Heart left ventricle (tissue), 16 donors: ENCODE measurements at regions of chr11 and their contacts with region 1.

Region 1: GRCh38 chr11:101436511-101437142 is 147.2 kb downstream of the TRPC6 start:
- DNase-seq: peak in 2 of 5 donors; percentile 32
- ATAC-seq: peak in 1 of 4 donors; percentile 73
- H3K4me3 ChIP-seq: no peak overlapping the region
- H3K27ac ChIP-seq: no peak overlapping the region
- H3K4me1 ChIP-seq: peaks cover 0 to 7% (median 2%) of the 10 kb centered on the region in 12 donors
- H3K27me3 ChIP-seq: no peaks in the 10 kb centered on the region
- CTCF ChIP-seq: peak; percentile 40 to 70 (median 60)
- POLR2A ChIP-seq: no peak

Region 2: GRCh38 chr11:100970283-100971164 is 466.1 kb before region 1 on chr11:
- intact Hi-C with region 1: loop called in 1 of 10 experiments (anchors 10 kb)
- DNase-seq: peak in 2 of 5 donors; percentile 7 to 20
- ATAC-seq: peak; percentile 73 to 84 (median 77)
- H3K4me3 ChIP-seq: no peak overlapping the region
- H3K27ac ChIP-seq: peak overlapping the region in 8 of 12 donors; percentile 6 to 60 (median 47)
- H3K4me1 ChIP-seq: peaks cover 0 to 16% (median 4%) of the 10 kb centered on the region in 12 donors
- H3K27me3 ChIP-seq: no peaks in the 10 kb centered on the region
- CTCF ChIP-seq: no peak
- POLR2A ChIP-seq: no peak

Region 3: DNA sequence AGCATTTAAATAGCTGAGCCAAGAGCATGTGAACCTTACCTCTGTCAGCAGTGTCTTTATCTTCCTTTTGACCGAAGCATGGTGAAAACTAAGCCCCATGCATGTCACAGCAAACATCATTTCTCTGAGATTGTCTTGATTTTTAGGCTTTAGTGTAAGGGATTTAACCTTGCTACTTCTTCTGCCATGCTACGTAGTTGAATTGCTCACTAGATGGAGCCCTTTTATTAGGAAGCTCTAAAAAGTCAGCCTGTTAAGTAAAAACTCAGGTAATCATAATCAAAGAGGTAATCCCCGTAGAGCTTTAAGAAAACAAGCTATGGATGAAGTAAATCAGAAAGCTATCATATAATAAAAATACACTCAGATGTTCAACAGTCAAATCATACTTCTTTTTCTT is 456.5 kb before region 1 on chr11:
- intact Hi-C with region 1: loop called in 9 of 10 experiments (anchors 5 to 10 kb)
- DNase-seq: no peak
- ATAC-seq: no peak
- H3K4me3 ChIP-seq: no peak overlapping the region
- H3K27ac ChIP-seq: no peak overlapping the region
- H3K4me1 ChIP-seq: no peaks in the 10 kb centered on the region
- H3K27me3 ChIP-seq: no peaks in the 10 kb centered on the region
- CTCF ChIP-seq: peak in 11 of 12 donors; percentile 18 to 67 (median 49)
- POLR2A ChIP-seq: no peak

Region 4: GRCh38 chr11:100991541-100991940 is 445.1 kb before region 1 on chr11:
- intact Hi-C with region 1: loop called in 2 of 10 experiments (anchors 2 to 10 kb)
- DNase-seq: no peak
- ATAC-seq: no peak
- H3K4me3 ChIP-seq: no peak overlapping the region
- H3K27ac ChIP-seq: no peak overlapping the region
- H3K4me1 ChIP-seq: peaks cover 0 to 10% (median 2%) of the 10 kb centered on the region in 12 donors
- H3K27me3 ChIP-seq: no peaks in the 10 kb centered on the region
- CTCF ChIP-seq: no peak
- POLR2A ChIP-seq: no peak

Region 5: DNA sequence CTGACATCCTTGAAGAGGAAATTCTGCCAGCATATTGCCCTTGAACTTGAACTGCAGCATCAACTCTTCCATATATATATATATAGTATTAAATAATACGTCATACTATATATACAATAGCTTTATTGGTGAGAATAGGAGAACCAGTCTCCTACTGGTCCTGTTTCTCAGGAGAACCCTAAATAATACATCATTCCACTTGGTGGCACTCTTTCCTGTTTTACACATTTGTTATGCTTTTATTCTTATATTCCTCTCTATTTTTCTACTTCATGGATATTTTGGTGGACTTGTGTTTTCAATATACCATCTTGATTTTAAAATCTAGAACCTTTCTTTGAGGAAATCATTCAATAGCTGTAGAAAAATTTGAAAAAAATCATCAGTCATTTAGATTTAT is 46.1 kb before region 1 on chr11:
- intact Hi-C with region 1: loop called in 2 of 10 experiments (anchors 5 kb)
- DNase-seq: no peak
- ATAC-seq: no peak
- H3K4me3 ChIP-seq: no peak overlapping the region
- H3K27ac ChIP-seq: no peak overlapping the region
- H3K4me1 ChIP-seq: no peaks in the 10 kb centered on the region
- H3K27me3 ChIP-seq: no peaks in the 10 kb centered on the region
- CTCF ChIP-seq: peak in 8 of 12 donors; percentile 12 to 40 (median 28)
- POLR2A ChIP-seq: no peak

Region 6: DNA sequence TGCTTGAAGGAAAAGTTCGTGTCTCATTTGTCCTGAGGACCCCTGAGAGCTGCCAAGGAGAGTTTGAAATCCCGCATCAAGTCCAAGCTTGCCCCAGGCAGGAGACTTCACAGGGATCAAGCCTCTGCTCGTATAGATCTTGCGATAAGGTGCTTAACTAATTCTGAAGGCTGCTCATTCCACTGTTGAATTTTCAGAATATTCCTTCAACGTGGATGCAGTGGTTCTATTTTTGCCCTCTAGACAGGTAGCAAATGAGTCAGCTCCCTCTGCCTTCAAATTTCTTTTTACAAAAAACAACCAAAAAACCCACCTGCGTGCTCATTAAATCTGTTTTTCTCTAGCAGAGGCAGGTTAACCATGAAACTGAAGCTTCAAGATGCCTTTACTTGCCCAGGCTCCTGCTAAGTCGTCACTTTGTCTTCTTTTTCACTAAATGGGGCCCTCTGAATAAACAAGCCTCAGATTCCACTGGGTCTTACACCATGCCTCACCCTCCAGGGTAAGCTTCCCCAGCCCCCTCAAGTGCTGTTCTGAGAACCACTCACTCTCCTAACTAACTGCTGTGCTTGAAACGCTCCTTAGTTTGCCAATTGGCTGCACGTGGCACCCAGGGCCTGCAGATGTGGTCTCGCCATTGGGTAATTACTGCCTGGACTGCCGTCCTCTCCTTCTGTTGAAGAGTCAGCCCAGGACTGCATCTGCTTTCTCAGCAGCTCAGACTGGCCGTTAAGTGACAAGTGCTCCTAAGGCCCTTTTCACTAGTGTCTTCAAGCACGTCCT is 42.2 kb after region 1 on chr11:
- intact Hi-C with region 1: no loop called
- DNase-seq: no peak
- ATAC-seq: no peak
- H3K4me3 ChIP-seq: no peak overlapping the region
- H3K27ac ChIP-seq: no peak overlapping the region
- H3K4me1 ChIP-seq: no peaks in the 10 kb centered on the region
- H3K27me3 ChIP-seq: no peaks in the 10 kb centered on the region
- CTCF ChIP-seq: no peak
- POLR2A ChIP-seq: no peak